ENCODE measurements at regions of chr1 and their contacts with region 1.

Region 1: DNA sequence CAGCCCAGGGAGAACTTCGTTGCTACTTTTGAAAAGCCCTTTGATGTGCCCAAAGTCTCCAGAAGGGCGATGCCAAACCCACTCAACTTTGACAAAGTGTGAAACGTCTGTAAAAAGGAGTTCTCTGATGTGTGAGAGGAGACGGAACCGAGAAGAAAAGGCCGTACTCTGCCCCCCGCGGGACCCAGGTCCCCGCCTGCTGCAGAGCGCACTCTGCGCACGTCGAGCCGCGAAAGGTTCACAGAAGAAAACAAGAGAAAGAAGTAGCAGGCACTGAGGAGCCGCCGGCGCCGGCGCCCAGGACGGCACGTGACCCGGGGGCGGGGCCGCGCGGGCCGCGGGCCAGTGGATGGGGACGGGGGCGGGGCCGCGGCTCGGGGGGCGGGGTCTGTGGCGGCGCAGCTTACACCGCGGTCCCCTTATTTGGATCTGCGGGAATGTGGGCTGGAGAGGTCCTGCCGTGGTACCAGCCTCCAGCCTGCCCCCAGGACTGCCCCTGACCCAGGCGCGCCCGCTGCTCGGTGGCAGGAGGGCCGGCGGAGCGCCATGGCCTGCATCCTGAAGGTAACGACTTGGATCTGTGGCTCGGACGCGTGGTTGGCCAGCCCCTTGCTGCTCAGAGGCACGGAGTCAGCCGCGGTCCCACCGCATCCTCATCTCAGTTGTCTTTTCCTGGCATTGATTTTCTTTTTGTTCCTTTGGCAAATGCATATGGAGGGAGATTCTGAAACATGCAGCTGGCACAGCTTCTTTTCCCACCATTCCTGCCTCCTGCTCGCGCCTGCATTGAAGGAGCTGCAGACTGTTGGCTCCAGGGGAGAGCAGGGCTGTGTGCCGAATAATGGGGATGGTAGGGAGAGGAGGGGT is at the start of gene ST6GALNAC3:
- DNase-seq: peak; percentile 59 to 91 (median 74)
- ATAC-seq: peak; percentile 96
- H3K4me3 ChIP-seq: peak within 1 kb of the TSS; percentile 80
- H3K4me3 Mint-ChIP-seq: peak within 1 kb of the TSS; percentile 93
- H3K27ac ChIP-seq: no peak within 1 kb of the TSS
- H3K27ac Mint-ChIP-seq: peak within 1 kb of the TSS; percentile 79
- H3K4me1 ChIP-seq: peaks cover 15% of the 10 kb centered on the region
- H3K4me1 Mint-ChIP-seq: peaks cover 23% of the 10 kb centered on the region
- H3K27me3 ChIP-seq: no peaks in the 10 kb centered on the region
- H3K27me3 Mint-ChIP-seq: no peaks in the 10 kb centered on the region
- CTCF ChIP-seq: no peak
- total RNA-seq, gene ST6GALNAC3: 0.77 to 1.3 TPM

Region 2: DNA sequence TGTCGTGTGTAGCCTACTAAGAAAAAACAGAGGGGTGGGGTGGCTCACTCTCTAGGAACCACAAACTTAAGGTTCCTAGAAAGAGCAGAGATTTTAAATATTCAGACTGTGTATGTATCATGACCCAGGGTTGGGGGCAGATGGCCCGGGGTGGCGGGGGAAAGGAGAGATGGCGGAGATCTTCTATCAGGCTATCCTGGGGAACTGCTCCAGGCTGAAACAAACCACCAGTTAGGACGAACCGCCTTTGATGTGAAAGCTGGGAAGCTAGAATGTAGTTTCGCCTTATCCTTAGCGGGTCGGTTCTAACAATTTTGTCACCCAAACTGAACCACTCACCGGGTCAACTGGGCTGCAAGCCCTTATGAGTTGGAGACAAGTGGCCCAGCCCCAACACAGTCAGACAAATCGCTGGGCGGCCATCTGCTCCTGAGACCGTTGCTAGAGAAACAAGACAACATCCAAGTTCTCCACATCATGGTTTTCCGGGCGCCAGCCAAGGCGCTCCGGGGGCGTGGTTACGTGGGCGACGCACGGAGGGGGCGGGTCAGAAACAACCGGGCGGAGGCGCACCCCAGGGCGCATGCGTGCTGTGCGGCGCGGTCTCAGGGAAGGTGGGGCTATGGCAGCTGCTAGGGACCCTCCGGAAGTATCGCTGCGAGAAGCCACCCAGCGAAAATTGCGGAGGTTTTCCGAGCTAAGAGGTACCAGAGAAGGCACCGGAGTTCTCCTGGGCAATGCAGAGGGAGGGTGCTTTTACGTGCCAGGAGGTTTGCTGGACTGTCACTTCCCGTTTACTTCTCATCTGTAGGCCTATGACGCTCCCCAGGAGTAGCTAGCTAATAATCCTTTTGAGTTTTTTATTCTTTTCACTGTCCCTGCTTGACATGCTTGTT is 1876.6 kb before region 1 on chr1 and contains the starts of genes FPGT and LRRIQ3:
- CTCF ChIA-PET with region 1: no interaction called
- POLR2A ChIA-PET with region 1: no interaction called
- intact Hi-C with region 1: loop called in 1 of 2 experiments (anchors 10 kb)
- DNase-seq: peak; percentile 92 to 98 (median 96)
- ATAC-seq: peak; percentile 94
- H3K4me3 ChIP-seq: peak within 1 kb of the TSS; percentile 76
- H3K4me3 Mint-ChIP-seq: peak within 1 kb of the TSS; percentile 93
- H3K27ac ChIP-seq: peak within 1 kb of the TSS; percentile 59 to 85
- H3K27ac Mint-ChIP-seq: peak within 1 kb of the TSS; percentile 86
- H3K4me1 ChIP-seq: peaks cover 6% of the 10 kb centered on the region
- H3K4me1 Mint-ChIP-seq: peaks cover 38% of the 10 kb centered on the region
- H3K27me3 ChIP-seq: no peaks in the 10 kb centered on the region
- H3K27me3 Mint-ChIP-seq: no peaks in the 10 kb centered on the region
- CTCF ChIP-seq: no peak
- total RNA-seq, gene FPGT: 3.0 to 4.5 TPM
- total RNA-seq, gene LRRIQ3: 0.08 to 0.25 TPM

Region 3: GRCh38 chr1:75785983-75786853 is 288.3 kb before region 1 on chr1 and contains the start of gene RABGGTB:
- CTCF ChIA-PET with region 1: no interaction called
- POLR2A ChIA-PET with region 1: no interaction called
- intact Hi-C with region 1: loop called in 1 of 2 experiments (anchors 5 kb)
- DNase-seq: peak; percentile 89 to 97 (median 92)
- ATAC-seq: peak; percentile 95
- H3K4me3 ChIP-seq: peak within 1 kb of the TSS; percentile 67
- H3K4me3 Mint-ChIP-seq: peak within 1 kb of the TSS; percentile 98
- H3K27ac ChIP-seq: peak within 1 kb of the TSS; percentile 84 to 86
- H3K27ac Mint-ChIP-seq: peak within 1 kb of the TSS; percentile 92
- H3K4me1 ChIP-seq: peaks cover 26% of the 10 kb centered on the region
- H3K4me1 Mint-ChIP-seq: peaks cover 57% of the 10 kb centered on the region
- H3K27me3 ChIP-seq: no peaks in the 10 kb centered on the region
- H3K27me3 Mint-ChIP-seq: no peaks in the 10 kb centered on the region
- CTCF ChIP-seq: no peak
- total RNA-seq, gene RABGGTB: 199 to 200 TPM

Region 4: DNA sequence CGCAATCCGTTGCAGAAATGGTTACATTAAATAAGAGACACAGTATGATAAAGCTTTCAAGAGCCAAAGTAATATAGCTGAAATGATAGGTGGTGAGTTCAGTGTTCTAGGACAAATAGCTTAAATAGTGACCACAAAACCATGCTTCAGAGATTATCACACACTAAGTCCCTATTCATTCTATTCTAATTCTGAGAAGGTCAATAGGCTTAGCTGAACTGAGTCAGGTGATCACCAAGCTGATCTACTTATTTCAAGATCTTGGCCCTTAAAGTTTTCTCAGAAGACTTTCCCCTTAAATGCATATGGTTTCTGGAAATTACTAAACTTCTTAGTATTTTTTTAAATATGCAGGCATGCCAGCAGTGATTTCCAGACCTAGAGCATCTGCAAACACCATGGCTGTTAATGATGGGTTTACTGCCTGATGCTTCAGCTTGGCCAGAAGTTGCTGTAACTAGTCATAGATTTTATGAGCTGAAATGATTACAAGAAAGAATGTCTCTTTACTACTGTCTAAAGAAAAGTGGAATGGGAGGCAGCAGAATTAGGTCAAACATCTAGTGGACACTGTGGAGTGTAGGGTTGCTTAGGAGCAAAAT is 242.8 kb after region 1 on chr1:
- CTCF ChIA-PET with region 1: no interaction called
- POLR2A ChIA-PET with region 1: no interaction called
- intact Hi-C with region 1: no loop called
- DNase-seq: no peak
- ATAC-seq: no peak
- H3K4me3 ChIP-seq: no peak overlapping the region
- H3K4me3 Mint-ChIP-seq: no peak overlapping the region
- H3K27ac ChIP-seq: no peak overlapping the region
- H3K27ac Mint-ChIP-seq: no peak overlapping the region
- H3K4me1 ChIP-seq: no peaks in the 10 kb centered on the region
- H3K4me1 Mint-ChIP-seq: no peaks in the 10 kb centered on the region
- H3K27me3 ChIP-seq: no peaks in the 10 kb centered on the region
- H3K27me3 Mint-ChIP-seq: no peaks in the 10 kb centered on the region
- CTCF ChIP-seq: no peak

Region 5: DNA sequence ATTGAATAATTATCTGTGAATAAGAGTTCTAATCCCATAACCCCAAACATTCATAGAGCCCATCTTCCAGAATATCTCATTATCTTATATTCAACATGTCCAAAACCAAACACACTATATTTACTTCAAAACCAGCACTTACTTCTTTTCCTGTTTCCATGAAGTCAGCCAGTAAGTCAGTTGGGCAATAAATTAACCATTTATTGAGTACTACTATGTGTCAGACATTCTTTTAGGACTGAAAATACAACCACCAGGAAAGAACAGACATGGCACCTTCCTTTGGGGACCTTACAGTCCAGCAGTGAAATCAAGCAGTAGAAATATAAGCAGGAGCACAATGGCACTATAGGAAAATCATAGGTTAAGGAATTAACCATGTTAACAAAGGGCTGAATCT is 1216.0 kb after region 1 on chr1:
- CTCF ChIA-PET with region 1: no interaction called
- POLR2A ChIA-PET with region 1: no interaction called
- intact Hi-C with region 1: loop called in 1 of 2 experiments (anchors 10 kb)
- DNase-seq: no peak
- ATAC-seq: no peak
- H3K4me3 ChIP-seq: no peak overlapping the region
- H3K4me3 Mint-ChIP-seq: no peak overlapping the region
- H3K27ac ChIP-seq: no peak overlapping the region
- H3K27ac Mint-ChIP-seq: no peak overlapping the region
- H3K4me1 ChIP-seq: no peaks in the 10 kb centered on the region
- H3K4me1 Mint-ChIP-seq: peaks cover 16% of the 10 kb centered on the region
- H3K27me3 ChIP-seq: no peaks in the 10 kb centered on the region
- H3K27me3 Mint-ChIP-seq: no peaks in the 10 kb centered on the region
- CTCF ChIP-seq: no peak

Region 6: GRCh38 chr1:77759071-77760028 is 1684.8 kb after region 1 on chr1 and contains the start of gene USP33:
- CTCF ChIA-PET with region 1: no interaction called
- POLR2A ChIA-PET with region 1: no interaction called
- intact Hi-C with region 1: loop called in 1 of 2 experiments (anchors 5 kb)
- DNase-seq: peak; percentile 86 to 97 (median 92)
- ATAC-seq: peak; percentile 95
- H3K4me3 ChIP-seq: peak within 1 kb of the TSS; percentile 80
- H3K4me3 Mint-ChIP-seq: peak within 1 kb of the TSS; percentile 90
- H3K27ac ChIP-seq: peak within 1 kb of the TSS; percentile 29 to 88
- H3K27ac Mint-ChIP-seq: peak within 1 kb of the TSS; percentile 87
- H3K4me1 ChIP-seq: peaks cover 23% of the 10 kb centered on the region
- H3K4me1 Mint-ChIP-seq: peaks cover 57% of the 10 kb centered on the region
- H3K27me3 ChIP-seq: no peaks in the 10 kb centered on the region
- H3K27me3 Mint-ChIP-seq: no peaks in the 10 kb centered on the region
- CTCF ChIP-seq: no peak
- total RNA-seq, gene USP33: 69.7 to 71.6 TPM

Measured in CD4-positive, alpha-beta T cell (primary cell).